ENCODE measurements at regions of chr4 and their contacts with region 1.

Region 1: DNA sequence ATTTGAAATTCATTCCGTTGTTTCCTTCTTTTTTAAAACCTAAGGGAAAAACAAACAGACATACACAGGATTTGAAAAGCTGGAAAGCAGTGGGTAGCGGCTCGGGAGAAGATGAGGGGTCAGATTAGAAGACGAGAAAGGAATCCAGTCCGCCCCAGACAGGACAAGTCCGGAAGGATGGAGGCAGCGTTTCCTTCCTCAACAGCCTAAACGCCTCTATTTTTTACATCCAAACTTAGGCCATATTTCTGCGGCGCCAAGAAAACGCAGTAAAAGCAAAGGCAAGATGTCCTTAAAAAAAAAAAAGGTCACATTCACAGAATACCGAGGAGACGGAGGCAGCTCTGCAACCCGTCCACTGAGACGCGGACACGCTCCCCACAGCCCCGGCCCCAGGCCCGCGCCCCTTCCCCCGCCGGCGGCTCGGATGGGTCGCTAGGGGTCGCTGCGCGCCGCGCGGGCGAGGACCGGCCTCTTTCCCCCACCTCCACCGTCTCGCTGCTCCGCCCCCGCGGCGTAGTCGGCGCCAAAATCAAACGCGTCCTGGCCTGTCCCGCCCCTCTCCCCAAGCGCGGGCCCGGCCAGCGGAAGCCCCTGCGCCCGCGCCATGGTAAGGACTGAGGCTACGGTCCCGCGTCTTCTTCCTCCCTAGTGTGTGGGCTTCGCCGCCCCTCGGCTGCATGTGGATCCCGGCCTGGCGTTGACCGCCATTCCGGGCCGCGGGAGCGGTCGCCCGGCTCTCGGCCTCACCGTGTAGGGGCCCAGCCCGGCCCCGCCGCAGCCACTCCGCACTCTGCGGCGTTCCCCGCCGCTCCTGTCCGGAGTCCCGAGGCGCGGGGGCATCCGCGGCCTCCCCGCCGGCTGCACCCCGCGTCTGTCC is at the start of gene MND1:
- DNase-seq: peak; percentile 73 to 96
- H3K4me3 ChIP-seq: peak within 1 kb of the TSS; percentile 66
- CTCF ChIP-seq: peak in 1 of 3 donors; percentile 55
- POLR2A ChIP-seq: no peak
- total RNA-seq, gene MND1: 0.49 to 2.4 TPM in 2 of 4 donors, not detected in the others

Region 2: GRCh38 chr4:153362184-153362583 is 17.8 kb after region 1 on chr4:
- intact Hi-C with region 1: no loop called
- DNase-seq: no peak
- H3K4me3 ChIP-seq: no peak overlapping the region
- CTCF ChIP-seq: no peak
- POLR2A ChIP-seq: no peak

Region 3: GRCh38 chr4:153573881-153574802 is 229.8 kb after region 1 on chr4:
- intact Hi-C with region 1: loop called (anchors 2 kb)
- DNase-seq: peak in 1 of 2 donors; percentile 32
- H3K4me3 ChIP-seq: no peak overlapping the region
- CTCF ChIP-seq: no peak
- POLR2A ChIP-seq: no peak

Region 4: DNA sequence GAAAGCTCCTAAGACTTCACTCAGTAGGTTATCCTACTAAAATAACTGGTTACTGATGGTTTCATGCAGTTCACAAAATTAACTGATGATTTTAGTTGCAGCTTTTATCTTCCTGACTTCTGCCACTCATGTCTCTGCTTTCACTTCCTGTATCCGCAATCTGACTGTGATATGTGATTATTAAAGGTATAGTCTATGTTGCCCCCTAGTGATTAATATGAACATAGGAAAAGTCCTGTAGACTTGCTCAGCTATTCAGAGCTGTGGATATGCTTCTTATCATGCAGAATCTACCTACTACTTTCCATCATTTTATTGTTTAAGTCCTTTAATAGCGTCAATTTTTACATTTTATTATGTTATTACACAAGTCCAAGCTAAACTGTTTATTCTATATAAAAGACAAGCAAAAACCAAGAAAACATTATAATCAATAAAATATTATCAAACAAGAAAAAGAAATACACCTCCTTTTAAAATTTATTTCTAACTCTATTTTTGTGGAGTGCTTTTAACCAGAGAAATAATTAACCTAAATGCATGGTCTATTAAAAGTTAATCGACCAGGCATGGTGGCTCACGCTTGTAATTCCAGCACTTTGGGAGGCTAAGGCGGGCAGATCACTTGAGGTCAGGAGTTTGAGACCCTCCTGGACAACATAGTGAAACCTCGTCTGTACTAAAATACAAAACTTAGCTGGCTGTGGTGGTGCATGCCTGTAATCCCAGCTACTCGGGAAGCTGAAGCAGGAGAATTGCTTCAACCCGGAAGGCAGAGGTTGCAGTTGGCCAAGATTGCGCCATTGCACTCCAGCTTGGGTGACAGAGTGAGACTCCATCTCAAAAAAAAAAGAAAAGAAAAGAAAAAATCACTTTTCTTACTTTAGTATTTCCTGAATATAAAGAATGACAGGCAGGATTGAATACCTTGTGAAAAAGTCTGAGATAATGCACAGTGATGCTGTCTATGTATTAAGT is 299.3 kb after region 1 on chr4:
- intact Hi-C with region 1: loop called (anchors 1 kb)
- DNase-seq: no peak
- H3K4me3 ChIP-seq: no peak overlapping the region
- CTCF ChIP-seq: no peak
- POLR2A ChIP-seq: no peak